Stomach (tissue), 19 donors: ENCODE measurements at regions of chr2 and their contacts with region 1.

Region 1: GRCh38 chr2:112317303-112318158 is 42.1 kb downstream of the ZC3H6 start:
- DNase-seq: peak in 1 of 2 donors; percentile 17
- H3K4me3 ChIP-seq: no peak overlapping the region
- H3K27ac ChIP-seq: no peak overlapping the region
- H3K4me1 ChIP-seq: peaks cover 0 to 5% (median 0%) of the 10 kb centered on the region in 4 donors
- H3K27me3 ChIP-seq: no peaks in the 10 kb centered on the region
- CTCF ChIP-seq: no peak
- EP300 ChIP-seq: no peak
- POLR2A ChIP-seq: no peak

Region 2: GRCh38 chr2:112343827-112344585 is 26.5 kb after region 1 on chr2:
- intact Hi-C with region 1: loop called (anchors 2 kb)
- DNase-seq: peak in 1 of 2 donors; percentile 17
- H3K4me3 ChIP-seq: no peak overlapping the region
- H3K27ac ChIP-seq: no peak overlapping the region
- H3K4me1 ChIP-seq: peaks cover 0 to 3% (median 0%) of the 10 kb centered on the region in 4 donors
- H3K27me3 ChIP-seq: no peaks in the 10 kb centered on the region
- CTCF ChIP-seq: no peak
- EP300 ChIP-seq: no peak
- POLR2A ChIP-seq: no peak